A673 (cell line): ENCODE measurements at regions of chr15 and their contacts with region 1.

Region 1: GRCh38 chr15:63466378-63467192 is 37.8 kb upstream of the USP3 start:
- DNase-seq: peak; percentile 73
- H3K4me3 ChIP-seq: no peak overlapping the region
- H3K27ac ChIP-seq: no peak overlapping the region
- H3K4me1 ChIP-seq: peaks cover 8% of the 10 kb centered on the region
- H3K27me3 ChIP-seq: no peaks in the 10 kb centered on the region
- CTCF ChIP-seq: peak; percentile 78

Region 2: DNA sequence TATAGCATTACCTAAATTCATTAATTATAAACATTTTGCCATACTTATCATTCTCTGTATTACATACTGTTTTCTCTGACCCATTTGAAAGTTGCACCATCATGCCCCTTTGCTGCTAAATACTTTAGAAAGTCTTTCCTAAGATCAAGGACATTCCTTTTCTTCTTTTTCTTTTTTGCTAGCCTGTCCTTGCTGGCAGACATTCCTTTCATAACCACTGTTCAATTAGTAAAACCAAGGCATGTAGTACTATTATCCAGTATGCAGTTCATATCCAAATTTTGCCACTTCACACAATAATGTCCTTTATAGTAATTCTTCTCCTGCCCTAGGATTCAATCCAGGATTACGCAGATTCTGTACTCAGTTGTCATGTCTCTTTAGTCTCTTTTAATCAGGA is 980.5 kb before region 1 on chr15:
- CTCF ChIA-PET with region 1: interaction called, 14 read pairs
- POLR2A ChIA-PET with region 1: no interaction called
- intact Hi-C with region 1: no loop called
- DNase-seq: no peak
- H3K4me3 ChIP-seq: no peak overlapping the region
- H3K27ac ChIP-seq: no peak overlapping the region
- H3K4me1 ChIP-seq: peaks cover 2% of the 10 kb centered on the region
- H3K27me3 ChIP-seq: no peaks in the 10 kb centered on the region
- CTCF ChIP-seq: no peak

Region 3: DNA sequence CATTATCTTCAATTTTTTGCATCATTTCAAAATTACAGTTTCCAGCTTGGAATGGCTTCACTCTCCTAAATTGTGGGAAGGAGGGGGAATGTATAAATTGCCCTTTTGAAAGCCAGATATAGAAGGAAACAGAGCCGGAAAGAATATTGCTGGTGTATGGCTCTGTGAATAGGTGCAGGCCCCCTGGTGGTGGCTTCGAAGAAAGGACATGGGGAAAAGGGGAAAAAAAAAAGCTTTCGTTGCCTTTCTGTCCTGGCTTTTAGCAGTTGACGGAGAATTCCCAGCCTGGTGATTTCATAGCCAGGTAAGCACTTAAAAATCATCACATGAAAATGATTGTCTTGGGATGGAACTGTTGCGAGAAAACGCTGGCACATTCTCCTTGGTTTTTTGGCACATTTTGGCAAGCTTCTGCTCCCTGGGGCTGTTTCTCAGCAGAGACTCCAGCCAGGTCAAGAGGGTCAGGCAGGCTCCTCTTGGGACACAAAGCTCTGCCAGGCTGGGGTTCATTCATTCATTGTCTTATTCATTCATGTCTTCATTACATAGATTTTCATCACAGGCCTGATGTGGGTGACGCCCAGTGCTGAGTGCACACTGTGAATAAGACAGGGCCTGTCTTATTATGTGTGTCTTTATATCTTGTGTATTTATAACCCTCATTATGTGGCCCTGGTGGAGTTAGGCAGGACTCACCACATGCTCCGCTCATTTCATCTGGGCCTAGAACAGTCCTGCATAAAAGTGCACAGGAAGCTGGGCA is 724.0 kb before region 1 on chr15:
- CTCF ChIA-PET with region 1: no interaction called
- POLR2A ChIA-PET with region 1: no interaction called
- intact Hi-C with region 1: no loop called
- DNase-seq: peak; percentile 79
- H3K4me3 ChIP-seq: no peak overlapping the region
- H3K27ac ChIP-seq: no peak overlapping the region
- H3K4me1 ChIP-seq: peaks cover 35% of the 10 kb centered on the region
- H3K27me3 ChIP-seq: no peaks in the 10 kb centered on the region
- CTCF ChIP-seq: peak; percentile 93